Ovary (tissue), 10 donors: ENCODE measurements at regions of chr18 and their contacts with region 1.

Region 1: GRCh38 chr18:63439334-63439733 is 17.1 kb upstream of the VPS4B start:
- DNase-seq: peak in 3 of 5 donors; percentile 21 to 57 (median 34)
- H3K4me3 ChIP-seq: no peak overlapping the region
- H3K27ac ChIP-seq: no peak overlapping the region
- H3K4me1 ChIP-seq: no peaks in the 10 kb centered on the region
- H3K27me3 ChIP-seq: no peaks in the 10 kb centered on the region
- CTCF ChIP-seq: peak; percentile 35 to 86 (median 69)
- EP300 ChIP-seq: no peak
- POLR2A ChIP-seq: no peak

Region 2: DNA sequence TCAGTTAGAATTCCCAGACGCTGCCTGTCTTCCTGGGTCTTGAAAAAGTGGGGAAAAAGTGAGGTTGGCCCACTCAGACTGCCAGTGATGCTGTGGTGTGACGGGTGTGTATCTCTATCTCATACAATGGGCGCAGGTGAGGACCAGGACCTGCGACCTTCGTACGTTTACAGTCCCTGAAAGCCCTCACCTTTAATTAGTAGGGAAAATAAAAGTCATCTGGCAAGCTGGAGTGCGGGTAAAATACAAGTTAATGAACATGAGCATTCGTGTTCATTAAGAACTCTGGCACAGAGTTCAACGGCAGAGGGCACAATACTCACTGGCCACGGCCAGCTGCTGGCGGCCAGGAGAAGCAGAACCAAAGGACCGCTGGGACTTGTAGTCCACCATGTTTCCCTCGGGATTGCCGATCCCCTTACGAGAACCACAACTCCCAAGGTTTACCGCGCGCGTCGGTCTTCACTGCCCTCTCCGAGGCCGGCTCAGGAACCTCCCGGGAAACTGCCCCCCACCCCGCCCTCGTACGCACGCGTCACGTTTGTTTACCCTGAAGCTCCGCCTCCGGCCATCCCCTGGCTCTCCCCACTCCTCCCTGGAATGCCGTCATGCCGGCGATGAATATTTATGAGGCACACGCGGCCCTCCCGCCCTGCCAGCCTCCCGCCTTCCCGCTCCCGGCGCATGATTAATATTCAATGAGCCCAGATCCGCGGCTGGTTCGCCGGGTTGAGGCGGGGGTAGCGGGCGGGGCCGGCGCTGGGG is 724.5 kb before region 1 on chr18:
- intact Hi-C with region 1: loop called in 1 of 4 experiments (anchors 10 kb)
- DNase-seq: peak; percentile 100
- H3K4me3 ChIP-seq: peak overlapping the region; percentile 59
- H3K27ac ChIP-seq: peak overlapping the region; percentile 91 to 99
- H3K4me1 ChIP-seq: peaks cover 1% of the 10 kb centered on the region
- H3K27me3 ChIP-seq: no peaks in the 10 kb centered on the region
- CTCF ChIP-seq: peak; percentile 72 to 86 (median 81)
- EP300 ChIP-seq: no peak
- POLR2A ChIP-seq: no peak

Region 3: DNA sequence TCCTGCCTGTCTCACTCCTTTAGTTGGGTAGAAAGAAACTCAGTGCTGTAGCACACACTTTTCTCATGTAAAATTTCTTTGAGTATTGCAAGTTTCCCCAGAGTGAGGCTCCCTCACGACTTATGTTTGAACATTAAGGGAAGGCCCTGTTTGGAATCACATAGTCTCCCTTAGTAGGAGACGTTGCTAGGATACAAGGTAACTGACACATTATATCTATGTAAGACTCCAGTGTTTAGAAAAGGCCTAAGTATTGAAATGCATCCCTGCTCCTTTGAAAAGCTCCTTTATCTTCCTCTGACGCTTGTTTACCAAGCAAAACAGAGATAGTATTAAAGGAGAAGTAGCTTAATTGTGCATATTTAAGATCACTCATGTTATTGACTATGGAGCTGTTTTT is 475.8 kb before region 1 on chr18:
- intact Hi-C with region 1: no loop called
- DNase-seq: no peak
- H3K4me3 ChIP-seq: no peak overlapping the region
- H3K27ac ChIP-seq: no peak overlapping the region
- H3K4me1 ChIP-seq: no peaks in the 10 kb centered on the region
- H3K27me3 ChIP-seq: no peaks in the 10 kb centered on the region
- CTCF ChIP-seq: no peak
- EP300 ChIP-seq: no peak
- POLR2A ChIP-seq: no peak

Region 4: DNA sequence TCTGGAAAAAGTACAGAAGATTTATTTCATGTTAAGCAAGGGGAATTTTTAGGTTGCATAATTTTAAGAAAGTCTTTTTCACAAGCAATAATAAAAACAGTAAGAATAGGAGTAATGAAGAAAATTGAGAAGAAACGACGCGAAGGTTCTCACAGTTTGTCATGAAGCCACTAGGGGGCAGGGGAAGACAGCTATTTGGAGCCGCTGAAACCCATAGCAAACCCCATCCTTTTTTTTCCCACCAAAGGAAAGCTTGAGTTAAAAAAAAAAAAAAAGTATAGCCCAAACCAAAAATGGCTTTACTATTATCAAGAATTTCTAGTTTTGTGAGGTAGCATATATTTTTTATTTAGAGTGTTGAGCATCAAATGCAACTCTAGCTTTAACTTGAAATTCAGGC is 423.1 kb before region 1 on chr18:
- intact Hi-C with region 1: loop called (anchors 2 to 10 kb)
- DNase-seq: peak in 4 of 5 donors; percentile 35 to 62 (median 48)
- H3K4me3 ChIP-seq: no peak overlapping the region
- H3K27ac ChIP-seq: no peak overlapping the region
- H3K4me1 ChIP-seq: no peaks in the 10 kb centered on the region
- H3K27me3 ChIP-seq: no peaks in the 10 kb centered on the region
- CTCF ChIP-seq: peak; percentile 56 to 80 (median 57)
- EP300 ChIP-seq: no peak
- POLR2A ChIP-seq: no peak

Region 5: GRCh38 chr18:63025251-63026090 is 413.9 kb before region 1 on chr18:
- intact Hi-C with region 1: loop called in 1 of 4 experiments (anchors 10 kb)
- DNase-seq: peak in 1 of 5 donors; percentile 26
- H3K4me3 ChIP-seq: no peak overlapping the region
- H3K27ac ChIP-seq: no peak overlapping the region
- H3K4me1 ChIP-seq: no peaks in the 10 kb centered on the region
- H3K27me3 ChIP-seq: no peaks in the 10 kb centered on the region
- CTCF ChIP-seq: no peak
- EP300 ChIP-seq: no peak
- POLR2A ChIP-seq: no peak

Region 6: GRCh38 chr18:63119647-63120046 is 319.7 kb before region 1 on chr18:
- intact Hi-C with region 1: loop called in 2 of 4 experiments (anchors 10 kb)
- DNase-seq: peak in 1 of 5 donors; percentile 33
- H3K4me3 ChIP-seq: no peak overlapping the region
- H3K27ac ChIP-seq: no peak overlapping the region
- H3K4me1 ChIP-seq: no peaks in the 10 kb centered on the region
- H3K27me3 ChIP-seq: no peaks in the 10 kb centered on the region
- CTCF ChIP-seq: peak in 2 of 3 donors; percentile 17 to 37
- EP300 ChIP-seq: no peak
- POLR2A ChIP-seq: no peak

Region 7: DNA sequence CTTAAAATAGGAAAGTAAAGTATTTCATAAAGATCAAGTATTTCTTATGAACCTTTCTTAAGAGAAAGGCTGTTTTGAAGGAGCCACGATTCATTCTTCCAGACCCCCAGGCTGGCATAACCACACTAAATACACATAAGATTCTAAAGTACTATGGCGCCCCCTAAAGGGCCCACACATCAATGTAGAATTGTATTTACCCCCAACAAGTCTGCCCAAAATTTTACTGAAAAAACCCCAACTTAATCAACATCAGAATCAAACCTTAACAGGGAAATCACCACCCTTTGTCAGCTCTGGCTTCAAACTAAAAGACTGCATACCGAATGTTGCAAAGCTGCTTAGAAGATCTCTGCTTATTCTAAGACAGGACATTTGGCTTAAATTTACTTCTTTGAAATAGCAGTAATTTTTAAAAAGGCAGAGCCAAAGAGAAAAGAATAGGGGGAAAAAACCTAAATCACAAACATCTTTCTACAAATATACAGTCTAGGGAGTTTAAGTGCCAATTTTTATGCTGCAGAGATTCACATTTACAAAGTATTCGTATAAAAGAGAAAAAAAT is 99.3 kb before region 1 on chr18:
- intact Hi-C with region 1: loop called in 1 of 4 experiments (anchors 10 kb)
- DNase-seq: peak in 2 of 5 donors; percentile 33 to 35
- H3K4me3 ChIP-seq: no peak overlapping the region
- H3K27ac ChIP-seq: no peak overlapping the region
- H3K4me1 ChIP-seq: no peaks in the 10 kb centered on the region
- H3K27me3 ChIP-seq: no peaks in the 10 kb centered on the region
- CTCF ChIP-seq: no peak
- EP300 ChIP-seq: no peak
- POLR2A ChIP-seq: no peak

Region 8: DNA sequence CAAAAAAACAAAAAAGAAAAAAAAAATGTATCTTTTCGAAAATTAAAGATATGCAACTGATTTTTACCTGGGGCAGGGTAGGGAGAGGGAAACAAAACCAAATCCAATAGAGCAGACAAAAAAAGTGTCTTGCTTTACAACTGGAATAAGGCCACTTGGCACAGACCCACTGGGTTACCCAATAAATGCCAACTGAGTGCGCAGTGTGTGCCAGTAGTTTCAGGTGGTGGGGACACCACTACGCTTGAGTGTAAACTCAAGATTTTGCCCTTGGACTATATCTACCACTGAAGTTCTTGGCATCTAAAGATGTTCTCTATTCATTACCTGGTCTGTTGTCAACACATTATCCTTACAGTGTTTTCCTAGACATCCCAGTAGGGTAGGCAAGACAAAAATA is 33.3 kb before region 1 on chr18:
- intact Hi-C with region 1: no loop called
- DNase-seq: no peak
- H3K4me3 ChIP-seq: no peak overlapping the region
- H3K27ac ChIP-seq: no peak overlapping the region
- H3K4me1 ChIP-seq: no peaks in the 10 kb centered on the region
- H3K27me3 ChIP-seq: no peaks in the 10 kb centered on the region
- CTCF ChIP-seq: no peak
- EP300 ChIP-seq: no peak
- POLR2A ChIP-seq: no peak